B cell (primary cell): ENCODE measurements at regions of chr2 and their contacts with region 1.

Region 1: GRCh38 chr2:3558205-3559014 is at the start of gene RNASEH1:
- DNase-seq: peak; percentile 98
- ATAC-seq: peak; percentile 96
- H3K4me3 ChIP-seq: peak within 1 kb of the TSS; percentile 69 to 87 (median 86)
- H3K4me3 Mint-ChIP-seq: peak within 1 kb of the TSS; percentile 95
- H3K27ac ChIP-seq: peak within 1 kb of the TSS; percentile 88 to 94
- H3K27ac Mint-ChIP-seq: peak within 1 kb of the TSS; percentile 98
- H3K4me1 ChIP-seq: peaks cover 21 to 35% of the 10 kb centered on the region in 2 donors
- H3K4me1 Mint-ChIP-seq: peaks cover 49% of the 10 kb centered on the region
- H3K27me3 ChIP-seq: no peaks in the 10 kb centered on the region
- H3K27me3 Mint-ChIP-seq: no peaks in the 10 kb centered on the region
- CTCF ChIP-seq: no peak
- total RNA-seq, gene RNASEH1: 24.2 and 25.1 TPM in 2 replicates

Region 2: DNA sequence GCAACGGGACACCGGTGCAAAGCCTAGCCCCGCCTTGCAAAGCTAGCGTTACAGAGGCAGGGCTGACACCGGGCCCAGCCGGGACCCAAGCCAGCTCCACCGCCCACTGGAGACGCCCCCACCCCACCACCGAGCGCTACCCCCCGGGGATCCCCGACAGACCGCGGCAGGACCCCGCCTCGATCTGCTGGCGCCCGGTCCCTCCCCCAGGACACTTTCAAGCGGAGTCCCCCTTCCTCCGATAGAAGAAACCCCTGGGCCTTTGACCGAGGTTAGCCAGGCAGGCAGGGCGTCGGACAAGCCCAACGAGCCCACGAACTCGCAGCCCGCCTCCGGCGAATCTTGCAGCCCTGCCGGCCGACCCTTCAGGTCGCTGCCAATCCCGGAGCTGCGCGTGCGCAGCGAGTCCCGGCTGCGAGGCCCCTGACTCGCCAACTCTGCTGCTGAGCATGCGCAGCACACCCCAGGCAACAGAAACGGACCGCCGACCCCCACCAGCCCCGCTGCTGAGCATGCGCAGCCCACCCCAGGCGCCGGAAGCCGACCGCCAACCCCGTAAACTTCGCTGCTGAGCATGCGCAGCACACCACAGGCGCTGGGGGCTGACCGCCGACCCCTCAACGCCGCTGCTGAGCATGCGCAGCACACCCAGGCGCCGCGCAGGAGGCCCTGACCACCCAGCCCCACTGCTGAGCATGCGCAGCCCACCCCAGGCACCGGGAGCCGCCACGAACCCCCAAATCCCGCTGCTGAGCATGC is 39.7 kb before region 1 on chr2:
- CTCF ChIA-PET with region 1: no interaction called
- POLR2A ChIA-PET with region 1: interaction called, 26 read pairs
- intact Hi-C with region 1: loop called (anchors 1 kb)
- DNase-seq: peak; percentile 99
- ATAC-seq: peak; percentile 76
- H3K4me3 ChIP-seq: peak overlapping the region; percentile 52 to 87 (median 79)
- H3K4me3 Mint-ChIP-seq: peak overlapping the region; percentile 96
- H3K27ac ChIP-seq: peak overlapping the region; percentile 73 to 93
- H3K27ac Mint-ChIP-seq: peak overlapping the region; percentile 97
- H3K4me1 ChIP-seq: peaks cover 18 to 25% of the 10 kb centered on the region in 2 donors
- H3K4me1 Mint-ChIP-seq: peaks cover 38% of the 10 kb centered on the region
- H3K27me3 ChIP-seq: no peaks in the 10 kb centered on the region
- H3K27me3 Mint-ChIP-seq: no peaks in the 10 kb centered on the region
- CTCF ChIP-seq: no peak